ENCODE measurements at regions of chr9 and their contacts with region 1.

Region 1: GRCh38 chr9:122940603-122941559 is at the start of gene RABGAP1:
- DNase-seq: peak; percentile 99
- H3K4me3 ChIP-seq: peak within 1 kb of the TSS; percentile 92
- H3K27ac ChIP-seq: peak within 1 kb of the TSS; percentile 54
- H3K4me1 ChIP-seq: peaks cover 32% of the 10 kb centered on the region
- CTCF ChIP-seq: no peak
- total RNA-seq, gene RABGAP1: 16.8 and 24.2 TPM in 2 replicates

Region 2: GRCh38 chr9:122954253-122954691 is 13.4 kb after region 1 on chr9:
- CTCF ChIA-PET with region 1: no interaction called
- POLR2A ChIA-PET with region 1: interaction called, 12 read pairs
- intact Hi-C with region 1: no loop called
- DNase-seq: no peak
- H3K4me3 ChIP-seq: no peak overlapping the region
- H3K27ac ChIP-seq: no peak overlapping the region
- H3K4me1 ChIP-seq: no peaks in the 10 kb centered on the region
- CTCF ChIP-seq: no peak